Breast epithelium (tissue), 4 donors: ENCODE measurements at regions of chr17 and their contacts with region 1.

Region 1: GRCh38 chr17:13490906-13491482 is 110.7 kb downstream of the HS3ST3A1 start:
- DNase-seq: no peak
- H3K4me3 ChIP-seq: no peak overlapping the region
- H3K27ac ChIP-seq: no peak overlapping the region
- H3K4me1 ChIP-seq: no peaks in the 10 kb centered on the region
- H3K27me3 ChIP-seq: no peaks in the 10 kb centered on the region
- CTCF ChIP-seq: no peak
- POLR2A ChIP-seq: no peak

Region 2: GRCh38 chr17:12789075-12789776 is 701.8 kb before region 1 on chr17 and contains the start of gene ARHGAP44:
- intact Hi-C with region 1: loop called (anchors 5 kb)
- DNase-seq: peak; percentile 22 to 57
- H3K4me3 ChIP-seq: peak within 1 kb of the TSS; percentile 62 to 81 (median 68)
- H3K27ac ChIP-seq: peak within 1 kb of the TSS in 1 of 2 donors; percentile 55
- H3K4me1 ChIP-seq: no peaks in the 10 kb centered on the region
- H3K27me3 ChIP-seq: peaks cover 0 to 4% of the 10 kb centered on the region in 2 donors
- CTCF ChIP-seq: no peak
- POLR2A ChIP-seq: no peak
- total RNA-seq, gene ARHGAP44: 2.4 to 13.0 (median 4.9) TPM

Region 3: GRCh38 chr17:13365331-13365730 is 125.7 kb before region 1 on chr17:
- intact Hi-C with region 1: no loop called
- DNase-seq: no peak
- H3K4me3 ChIP-seq: no peak overlapping the region
- H3K27ac ChIP-seq: no peak overlapping the region
- H3K4me1 ChIP-seq: no peaks in the 10 kb centered on the region
- H3K27me3 ChIP-seq: no peaks in the 10 kb centered on the region
- CTCF ChIP-seq: no peak
- POLR2A ChIP-seq: no peak

Region 4: GRCh38 chr17:13462146-13462545 is 28.8 kb before region 1 on chr17:
- intact Hi-C with region 1: no loop called
- DNase-seq: no peak
- H3K4me3 ChIP-seq: no peak overlapping the region
- H3K27ac ChIP-seq: no peak overlapping the region
- H3K4me1 ChIP-seq: no peaks in the 10 kb centered on the region
- H3K27me3 ChIP-seq: no peaks in the 10 kb centered on the region
- CTCF ChIP-seq: no peak
- POLR2A ChIP-seq: no peak

Region 5: DNA sequence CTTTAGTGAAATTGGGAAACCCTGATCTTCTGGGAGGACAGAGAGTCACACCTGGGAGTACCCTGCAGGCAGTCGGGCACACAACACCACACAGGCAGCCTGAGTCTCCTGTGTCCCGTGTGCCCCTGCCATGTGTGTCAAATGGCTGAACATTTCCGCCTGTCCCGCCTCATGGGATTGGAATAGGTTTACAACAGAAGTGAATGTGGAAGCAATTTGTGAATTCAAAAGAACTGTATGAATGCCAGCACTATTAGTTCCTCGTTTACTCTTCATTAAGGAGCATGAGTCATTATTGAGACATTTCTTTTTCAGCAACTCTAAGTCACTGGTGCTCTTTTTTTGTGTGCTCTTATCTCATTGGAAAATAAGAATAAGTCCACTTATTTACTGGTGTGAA is 1547.7 kb after region 1 on chr17:
- intact Hi-C with region 1: no loop called
- DNase-seq: peak in 1 of 2 donors; percentile 23
- H3K4me3 ChIP-seq: peak overlapping the region in 1 of 3 donors; percentile 8
- H3K27ac ChIP-seq: no peak overlapping the region
- H3K4me1 ChIP-seq: no peaks in the 10 kb centered on the region
- H3K27me3 ChIP-seq: no peaks in the 10 kb centered on the region
- CTCF ChIP-seq: no peak
- POLR2A ChIP-seq: no peak